ENCODE measurements at regions of chr17 and their contacts with region 1.

Region 1: GRCh38 chr17:1122533-1123392 is 57.0 kb downstream of the ABR start:
- DNase-seq: peak; percentile 89
- ATAC-seq: peak; percentile 71
- H3K4me3 Mint-ChIP-seq: no peak overlapping the region
- H3K27ac Mint-ChIP-seq: peak overlapping the region; percentile 57
- H3K4me1 Mint-ChIP-seq: peaks cover 38% of the 10 kb centered on the region
- H3K27me3 Mint-ChIP-seq: no peaks in the 10 kb centered on the region

Region 2: DNA sequence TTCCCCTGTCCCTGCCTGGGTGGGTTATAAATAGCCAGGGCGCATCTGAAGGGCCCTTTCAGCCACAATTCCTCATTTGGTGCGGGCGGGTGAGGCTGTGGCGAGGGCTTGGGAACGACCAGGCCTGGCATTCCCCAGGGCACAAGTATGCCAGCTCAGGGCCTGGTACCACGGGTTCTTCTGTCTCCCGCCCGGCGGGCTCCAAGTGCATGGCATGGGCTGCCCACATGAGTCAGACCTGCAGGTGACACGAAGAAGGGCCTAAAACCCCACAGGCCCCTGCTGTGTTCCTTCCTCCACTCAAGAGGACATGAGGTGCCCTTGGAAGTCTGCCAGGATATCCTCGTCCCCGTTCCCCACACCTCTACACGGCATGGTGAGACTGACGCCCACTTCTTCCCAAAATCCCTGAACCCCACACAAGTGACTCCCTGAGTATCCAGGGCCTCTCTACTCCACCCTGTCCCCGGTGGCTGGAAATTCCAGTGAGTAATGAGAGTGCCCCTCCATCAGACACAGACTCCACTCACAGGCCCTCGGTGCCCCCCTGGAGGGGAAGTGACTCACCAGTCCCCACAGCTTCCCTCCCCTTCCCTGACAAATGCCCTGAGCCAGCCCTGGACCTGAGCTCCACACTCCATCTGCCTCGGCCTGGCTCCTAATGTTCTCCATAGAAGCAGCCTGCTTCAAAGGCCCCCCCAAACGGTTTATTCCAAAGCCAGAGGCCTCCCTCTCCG is 11.7 kb before region 1 on chr17:
- CTCF ChIA-PET with region 1: interaction called, 21 read pairs
- DNase-seq: no peak
- ATAC-seq: no peak
- H3K4me3 Mint-ChIP-seq: peak overlapping the region; percentile 11
- H3K27ac Mint-ChIP-seq: peak overlapping the region; percentile 26
- H3K4me1 Mint-ChIP-seq: peaks cover 62% of the 10 kb centered on the region
- H3K27me3 Mint-ChIP-seq: no peaks in the 10 kb centered on the region

Region 3: DNA sequence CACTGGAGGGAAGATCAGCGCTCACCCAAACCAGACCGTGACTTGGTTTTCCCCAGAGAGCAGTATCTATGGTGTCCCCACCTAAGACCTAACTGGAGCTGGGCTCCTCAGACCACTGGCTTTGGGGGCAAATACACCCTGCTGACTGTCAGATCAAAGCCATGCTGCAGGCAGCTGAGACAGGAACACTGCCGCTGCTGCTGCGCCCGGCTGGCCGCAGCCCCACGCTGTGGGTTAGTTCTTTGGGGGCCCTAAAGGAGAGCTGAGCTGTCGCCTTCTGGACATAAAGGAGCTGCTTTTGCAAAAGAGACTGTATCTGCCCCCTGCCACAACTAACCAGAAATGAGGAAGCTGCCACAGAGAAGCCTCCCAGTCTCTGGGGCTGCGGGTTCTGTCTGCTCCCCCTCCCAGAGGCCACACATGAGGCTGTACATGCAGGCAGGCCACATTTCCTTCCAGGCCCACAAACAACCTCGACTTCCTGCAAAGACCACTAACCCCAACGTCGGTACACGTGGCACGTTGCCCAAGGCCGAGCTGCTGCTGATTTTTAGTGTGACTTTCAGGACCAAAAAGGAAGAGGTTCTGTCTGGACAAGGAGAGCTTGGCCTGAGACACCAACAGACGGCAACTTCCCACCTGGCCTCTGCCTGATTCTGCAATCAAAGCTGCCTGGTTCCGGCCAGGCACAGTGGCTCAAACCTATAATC is 75.2 kb after region 1 on chr17:
- CTCF ChIA-PET with region 1: interaction called, 70 read pairs
- DNase-seq: peak; percentile 96
- ATAC-seq: peak; percentile 67
- H3K4me3 Mint-ChIP-seq: peak overlapping the region; percentile 52
- H3K27ac Mint-ChIP-seq: peak overlapping the region; percentile 91
- H3K4me1 Mint-ChIP-seq: peaks cover 65% of the 10 kb centered on the region
- H3K27me3 Mint-ChIP-seq: peaks cover 3% of the 10 kb centered on the region

Region 4: GRCh38 chr17:1251866-1252608 is 129.3 kb after region 1 on chr17:
- CTCF ChIA-PET with region 1: interaction called, 29 read pairs
- DNase-seq: no peak
- ATAC-seq: no peak
- H3K4me3 Mint-ChIP-seq: no peak overlapping the region
- H3K27ac Mint-ChIP-seq: no peak overlapping the region
- H3K4me1 Mint-ChIP-seq: peaks cover 18% of the 10 kb centered on the region
- H3K27me3 Mint-ChIP-seq: peaks cover 11% of the 10 kb centered on the region

Region 5: DNA sequence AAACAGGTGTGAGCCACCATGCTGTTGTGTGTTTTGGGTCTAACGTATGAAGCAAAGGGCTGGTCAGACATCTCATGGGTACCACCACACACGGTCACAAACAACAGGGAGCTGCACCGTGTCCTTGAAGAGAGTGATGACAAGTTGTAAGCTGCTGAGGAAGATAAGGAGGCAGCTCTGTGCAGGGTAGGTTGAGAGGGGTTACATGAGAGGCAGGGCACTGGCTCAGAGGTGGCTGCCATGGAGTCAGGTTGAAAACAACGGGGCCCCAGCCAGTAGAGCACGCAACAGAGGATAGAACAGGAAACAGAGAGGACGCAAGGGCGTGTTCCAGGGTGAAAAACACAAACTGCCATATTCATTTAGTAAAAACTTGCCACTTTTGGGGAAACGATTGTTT is 208.9 kb after region 1 on chr17:
- CTCF ChIA-PET with region 1: interaction called, 17 read pairs
- DNase-seq: peak; percentile 50
- ATAC-seq: peak; percentile 46
- H3K4me3 Mint-ChIP-seq: no peak overlapping the region
- H3K27ac Mint-ChIP-seq: no peak overlapping the region
- H3K4me1 Mint-ChIP-seq: peaks cover 10% of the 10 kb centered on the region
- H3K27me3 Mint-ChIP-seq: peaks cover 4% of the 10 kb centered on the region